ENCODE measurements at regions of chr15 and their contacts with region 1.

Region 1: GRCh38 chr15:35697549-35698299 is 151.8 kb upstream of the DPH6 start:
- DNase-seq: peak; percentile 97
- H3K4me3 ChIP-seq: peak overlapping the region in 1 of 3 experiments; percentile 18
- H3K27ac ChIP-seq: peak overlapping the region; percentile 92
- H3K4me1 ChIP-seq: peaks cover 37% of the 10 kb centered on the region
- H3K27me3 ChIP-seq: no peaks in the 10 kb centered on the region
- CTCF ChIP-seq: peak; percentile 13 to 19
- POLR2A ChIP-seq: peak; percentile 25

Region 2: DNA sequence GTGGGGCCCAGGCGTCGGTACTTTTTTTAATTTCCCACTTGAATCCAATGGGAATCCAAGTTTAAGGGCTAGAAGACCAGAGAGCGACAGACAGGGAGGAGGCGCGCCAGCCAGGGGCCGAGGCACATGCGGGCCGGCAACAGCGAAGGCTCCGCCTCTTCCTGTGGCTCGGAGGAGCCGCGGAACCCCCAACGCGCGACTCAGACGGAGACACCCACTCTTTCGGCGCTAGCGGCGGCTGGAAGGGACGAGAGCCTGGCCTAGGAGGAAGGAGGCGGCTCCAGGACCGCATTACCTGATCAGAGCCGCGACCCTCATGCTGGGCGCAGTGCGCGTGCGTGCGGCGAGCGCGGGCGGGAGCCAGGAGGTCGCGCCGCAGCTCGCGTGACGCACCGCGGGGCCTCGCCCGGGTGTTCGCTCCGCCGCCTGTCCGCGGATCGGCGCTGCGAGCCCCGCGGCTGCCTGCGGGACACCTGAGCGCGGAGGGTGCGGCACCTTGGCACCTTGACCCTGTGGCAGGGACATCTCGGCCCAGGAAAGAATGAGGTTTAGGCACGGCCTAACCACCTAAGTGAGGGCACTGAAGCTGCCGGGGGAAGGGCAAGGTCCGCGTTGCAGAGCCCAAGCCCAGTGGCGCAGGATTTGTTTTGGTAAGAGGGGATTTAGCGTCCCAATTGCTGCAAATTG is 151.8 kb before region 1 on chr15 and contains the start of gene DPH6:
- CTCF ChIA-PET with region 1: interaction called, 5 read pairs
- POLR2A ChIA-PET with region 1: interaction called, 4 read pairs
- dilution Hi-C with region 1: no loop called
- intact Hi-C with region 1: loop called (anchors 1 kb)
- DNase-seq: peak; percentile 91
- H3K4me3 ChIP-seq: peak within 1 kb of the TSS; percentile 13 to 60 (median 40)
- H3K27ac ChIP-seq: peak within 1 kb of the TSS; percentile 96
- H3K4me1 ChIP-seq: peaks cover 10% of the 10 kb centered on the region
- H3K27me3 ChIP-seq: no peaks in the 10 kb centered on the region
- CTCF ChIP-seq: no peak
- POLR2A ChIP-seq: peak; percentile 81
- total RNA-seq, gene DPH6: 10.1 and 12.4 TPM in 2 replicates

Region 3: DNA sequence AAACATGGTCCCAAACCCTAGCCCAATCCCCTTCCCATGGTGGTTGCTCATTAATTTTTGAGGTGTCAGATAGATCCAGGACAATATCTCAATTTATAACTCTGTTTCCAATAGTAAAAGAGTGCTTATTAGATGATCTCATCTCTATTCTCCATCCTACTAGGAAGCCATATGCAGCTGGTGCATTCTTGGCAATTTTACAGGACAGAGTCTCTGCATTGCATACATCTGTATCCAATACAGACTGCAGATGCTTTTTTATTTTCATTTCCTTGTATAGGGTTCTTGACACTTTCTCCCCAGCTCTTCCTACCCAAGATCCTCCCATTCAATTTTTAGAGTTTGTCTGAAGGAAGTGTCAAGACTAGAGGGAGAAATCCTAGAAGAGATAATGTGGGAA is 43.0 kb after region 1 on chr15:
- CTCF ChIA-PET with region 1: interaction called, 3 read pairs
- POLR2A ChIA-PET with region 1: no interaction called
- dilution Hi-C with region 1: no loop called
- intact Hi-C with region 1: loop called (anchors 2 kb)
- DNase-seq: peak; percentile 36
- H3K4me3 ChIP-seq: no peak overlapping the region
- H3K27ac ChIP-seq: no peak overlapping the region
- H3K4me1 ChIP-seq: peaks cover 31% of the 10 kb centered on the region
- H3K27me3 ChIP-seq: no peaks in the 10 kb centered on the region
- CTCF ChIP-seq: no peak
- POLR2A ChIP-seq: no peak

Region 4: DNA sequence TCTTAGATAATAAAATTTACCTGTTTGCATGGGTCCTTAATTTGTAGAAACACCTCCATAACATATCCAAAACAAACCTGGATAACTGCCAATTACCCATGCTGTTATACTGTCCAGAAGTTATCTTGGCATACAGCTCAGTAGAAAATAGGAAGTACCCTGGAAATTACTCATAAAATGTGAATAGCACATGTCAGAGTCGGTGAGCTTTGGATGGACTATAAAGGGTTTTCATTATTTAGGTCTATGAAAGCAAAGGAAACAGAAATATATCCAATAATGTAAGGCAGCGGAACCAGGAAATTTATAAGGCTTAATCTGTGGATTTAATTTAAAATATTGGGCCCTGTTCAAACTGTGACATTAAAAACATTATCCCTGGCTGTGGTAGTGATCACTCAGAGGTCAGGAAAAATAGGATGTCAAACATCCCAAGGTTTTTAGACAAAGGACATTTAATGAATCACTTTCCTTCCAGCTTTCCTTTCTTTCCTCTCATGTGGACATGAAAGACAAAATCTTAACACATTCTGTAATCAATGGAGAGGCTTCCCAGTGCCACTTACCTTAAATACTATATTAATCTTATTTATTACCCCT is 307.3 kb after region 1 on chr15:
- CTCF ChIA-PET with region 1: interaction called, 3 read pairs
- POLR2A ChIA-PET with region 1: no interaction called
- dilution Hi-C with region 1: no loop called
- intact Hi-C with region 1: loop called (anchors 5 kb)
- DNase-seq: peak; percentile 87
- H3K4me3 ChIP-seq: peak overlapping the region in 1 of 3 experiments; percentile 33
- H3K27ac ChIP-seq: peak overlapping the region; percentile 91
- H3K4me1 ChIP-seq: peaks cover 29% of the 10 kb centered on the region
- H3K27me3 ChIP-seq: no peaks in the 10 kb centered on the region
- CTCF ChIP-seq: no peak
- POLR2A ChIP-seq: no peak

Region 5: GRCh38 chr15:36883713-36884517 is 1186.2 kb after region 1 on chr15:
- CTCF ChIA-PET with region 1: no interaction called
- POLR2A ChIA-PET with region 1: no interaction called
- dilution Hi-C with region 1: no loop called
- intact Hi-C with region 1: loop called (anchors 1 kb)
- DNase-seq: peak; percentile 79
- H3K4me3 ChIP-seq: no peak overlapping the region
- H3K27ac ChIP-seq: no peak overlapping the region
- H3K4me1 ChIP-seq: peaks cover 11% of the 10 kb centered on the region
- H3K27me3 ChIP-seq: peaks cover 90 to 99% of the 10 kb centered on the region in 2 experiments
- CTCF ChIP-seq: peak; percentile 72 to 91
- POLR2A ChIP-seq: no peak

Measured in endothelial cell of umbilical vein (primary cell).